ENCODE measurements at regions of chr7 and their contacts with region 1.

Region 1: GRCh38 chr7:56033671-56034432 is 17.4 kb downstream of the PSPH start:
- DNase-seq: peak; percentile 67
- H3K27ac ChIP-seq: peak overlapping the region; percentile 88
- CTCF ChIP-seq: no peak

Region 2: GRCh38 chr7:55622241-55622640 is 411.6 kb before region 1 on chr7:
- CTCF ChIA-PET with region 1: no interaction called
- POLR2A ChIA-PET with region 1: no interaction called
- DNase-seq: no peak
- H3K27ac ChIP-seq: no peak overlapping the region
- CTCF ChIP-seq: no peak

Region 3: GRCh38 chr7:56063882-56064625 is 30.2 kb after region 1 on chr7 and contains the start of gene SUMF2:
- CTCF ChIA-PET with region 1: no interaction called
- POLR2A ChIA-PET with region 1: interaction called, 14 read pairs
- DNase-seq: peak; percentile 98
- H3K27ac ChIP-seq: peak within 1 kb of the TSS; percentile 92
- CTCF ChIP-seq: peak; percentile 23; the same call in 1 of the 2 replicates

Measured in RWPE1 (cell line).